HCT116 (cell line): ENCODE measurements at regions of chr12 and their contacts with region 1.

Region 1: DNA sequence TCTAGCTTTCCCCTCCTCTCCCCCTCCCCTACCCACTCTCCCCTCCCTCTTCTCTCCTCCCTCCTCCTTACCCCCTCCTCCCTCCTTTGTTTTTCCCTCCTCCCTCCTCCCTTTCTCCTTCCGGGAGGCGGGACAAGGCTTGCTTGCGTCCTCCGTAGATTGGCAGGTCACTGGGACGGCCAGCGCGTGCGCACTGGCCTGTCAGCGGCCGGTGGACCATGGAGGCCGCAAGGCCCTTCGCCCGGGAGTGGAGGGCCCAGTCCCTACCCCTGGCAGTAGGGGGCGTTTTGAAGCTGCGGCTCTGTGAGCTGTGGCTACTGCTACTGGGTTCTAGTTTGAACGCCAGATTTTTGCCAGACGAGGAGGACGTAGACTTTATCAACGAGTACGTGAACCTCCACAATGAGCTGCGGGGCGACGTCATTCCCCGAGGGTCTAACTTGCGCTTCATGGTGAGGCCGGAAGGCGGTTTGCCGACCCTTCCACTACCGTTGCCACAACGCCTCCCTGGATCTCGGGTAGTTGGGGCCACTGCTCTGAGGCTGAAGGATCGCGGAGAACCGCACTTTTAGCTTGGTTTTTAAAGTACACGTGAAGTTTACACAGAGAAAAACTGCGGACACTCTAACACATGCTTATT is at the start of gene GLIPR1L2:
- DNase-seq: peak; percentile 98
- ATAC-seq: peak; percentile 94
- H3K4me3 ChIP-seq: peak within 1 kb of the TSS; percentile 49 to 63
- H3K27ac ChIP-seq: peak within 1 kb of the TSS; percentile 77
- H3K4me1 ChIP-seq: peaks cover 26 to 46% of the 10 kb centered on the region in 2 experiments
- H3K27me3 ChIP-seq: no peaks in the 10 kb centered on the region
- CTCF ChIP-seq: peak; percentile 61 to 94 (median 84); a peak in 5 of 6 replicates
- POLR2A ChIP-seq: peak; percentile 23
- RAD21 ChIP-seq: peak; percentile 73
- total RNA-seq, gene GLIPR1L2: 0.44 TPM

Region 2: DNA sequence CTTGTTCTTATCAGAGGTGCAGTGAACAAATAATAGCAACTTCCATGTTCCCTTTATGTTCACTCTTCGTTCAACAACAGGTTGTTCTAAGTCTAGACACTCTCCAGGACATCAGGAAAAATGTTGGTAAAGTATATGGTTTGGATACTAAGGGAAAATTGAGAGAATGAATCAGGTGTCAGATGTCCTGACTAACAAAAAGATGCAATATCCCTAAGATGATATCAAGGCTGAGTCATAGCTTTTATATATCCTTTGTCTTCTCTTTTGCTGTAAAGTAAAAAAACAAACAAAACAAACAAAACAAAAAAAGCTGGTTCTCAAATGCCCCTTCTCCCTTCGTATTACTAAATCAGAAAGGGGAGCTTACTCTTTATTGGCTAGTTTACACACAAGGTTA is 45.5 kb before region 1 on chr12:
- CTCF ChIA-PET with region 1: interaction called, 3 read pairs
- POLR2A ChIA-PET with region 1: no interaction called
- RAD21 ChIA-PET with region 1: no interaction called
- intact Hi-C with region 1: loop called (anchors 5 kb)
- DNase-seq: peak; percentile 33
- ATAC-seq: peak; percentile 32; the same call in 1 of the 2 replicates
- H3K4me3 ChIP-seq: peak overlapping the region in 1 of 2 experiments; percentile 21; a peak in 1 of 4 replicates
- H3K27ac ChIP-seq: peak overlapping the region; percentile 55; the same call in 1 of the 2 replicates
- H3K4me1 ChIP-seq: peaks cover 43 to 60% of the 10 kb centered on the region in 2 experiments
- H3K27me3 ChIP-seq: no peaks in the 10 kb centered on the region
- CTCF ChIP-seq: no peak
- POLR2A ChIP-seq: no peak
- RAD21 ChIP-seq: no peak

Region 3: GRCh38 chr12:77010691-77011548 is 1619.9 kb after region 1 on chr12:
- CTCF ChIA-PET with region 1: no interaction called
- POLR2A ChIA-PET with region 1: no interaction called
- RAD21 ChIA-PET with region 1: no interaction called
- intact Hi-C with region 1: no loop called
- DNase-seq: peak; percentile 66
- ATAC-seq: peak; percentile 93
- H3K4me3 ChIP-seq: no peak overlapping the region
- H3K27ac ChIP-seq: no peak overlapping the region
- H3K4me1 ChIP-seq: peaks cover 0 to 4% of the 10 kb centered on the region in 2 experiments; a peak in 1 of 4 replicates
- H3K27me3 ChIP-seq: no peaks in the 10 kb centered on the region
- CTCF ChIP-seq: peak; percentile 68 to 99 (median 96); a peak in 5 of 6 replicates
- POLR2A ChIP-seq: no peak
- RAD21 ChIP-seq: peak; percentile 88